Testis (tissue), 5 donors: ENCODE measurements at regions of chr15 and their contacts with region 1.

Region 1: GRCh38 chr15:51227940-51228783 is 110.2 kb downstream of the CYP19A1 start:
- DNase-seq: no peak
- H3K4me3 ChIP-seq: no peak overlapping the region
- H3K27ac ChIP-seq: no peak overlapping the region
- H3K4me1 ChIP-seq: no peaks in the 10 kb centered on the region
- H3K27me3 ChIP-seq: no peaks in the 10 kb centered on the region
- CTCF ChIP-seq: no peak
- POLR2A ChIP-seq: no peak

Region 2: DNA sequence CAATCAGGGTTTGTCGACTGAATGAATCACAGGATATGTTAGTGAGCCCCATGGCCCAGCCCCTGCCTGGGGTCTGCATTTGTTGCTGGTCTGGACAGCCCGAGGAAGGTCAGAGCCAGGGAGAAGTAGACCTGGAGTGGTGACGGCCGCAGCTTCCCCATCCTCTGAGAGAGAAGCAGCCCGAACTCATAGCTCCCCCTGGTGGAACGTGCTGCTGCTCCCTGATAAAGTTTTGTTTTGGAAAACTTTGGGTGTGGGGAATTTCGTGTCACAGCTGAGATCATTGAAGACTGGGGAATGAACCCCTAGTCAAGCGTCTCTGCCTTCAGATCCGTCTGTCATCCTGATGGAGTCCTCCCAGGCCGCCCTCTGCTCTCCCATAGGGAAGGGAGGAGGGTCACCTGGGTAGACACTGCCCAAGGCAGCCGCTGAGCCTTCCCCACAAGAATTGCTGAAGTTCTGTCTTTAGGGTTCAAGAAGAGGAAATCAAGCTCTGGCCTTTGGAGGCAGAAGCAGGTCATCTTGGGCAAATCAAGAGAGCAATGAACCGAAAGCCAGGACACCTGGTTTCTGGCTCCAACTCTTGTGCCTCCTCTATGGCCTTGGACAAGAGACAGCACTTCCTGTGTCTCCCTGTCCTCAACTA is 173.8 kb after region 1 on chr15:
- intact Hi-C with region 1: loop called (anchors 5 kb)
- DNase-seq: peak; percentile 54
- H3K4me3 ChIP-seq: no peak overlapping the region
- H3K27ac ChIP-seq: no peak overlapping the region
- H3K4me1 ChIP-seq: no peaks in the 10 kb centered on the region
- H3K27me3 ChIP-seq: no peaks in the 10 kb centered on the region
- CTCF ChIP-seq: peak; percentile 10 to 63 (median 48)
- POLR2A ChIP-seq: no peak